ENCODE measurements at regions of chr2 and their contacts with region 1.

Region 1: GRCh38 chr2:85707304-85707703 is 13.1 kb downstream of the GNLY start:
- DNase-seq: peak; percentile 89
- H3K4me3 ChIP-seq: no peak overlapping the region
- H3K27ac ChIP-seq: no peak overlapping the region
- H3K4me1 ChIP-seq: peaks cover 22% of the 10 kb centered on the region
- H3K27me3 ChIP-seq: no peaks in the 10 kb centered on the region
- CTCF ChIP-seq: peak; percentile 94

Region 2: GRCh38 chr2:85589982-85590791 is 117.1 kb before region 1 on chr2:
- CTCF ChIA-PET with region 1: no interaction called
- POLR2A ChIA-PET with region 1: no interaction called
- intact Hi-C with region 1: no loop called
- DNase-seq: peak; percentile 58
- H3K4me3 ChIP-seq: no peak overlapping the region
- H3K27ac ChIP-seq: peak overlapping the region; percentile 56
- H3K4me1 ChIP-seq: peaks cover 17% of the 10 kb centered on the region
- H3K27me3 ChIP-seq: no peaks in the 10 kb centered on the region
- CTCF ChIP-seq: no peak

Region 3: DNA sequence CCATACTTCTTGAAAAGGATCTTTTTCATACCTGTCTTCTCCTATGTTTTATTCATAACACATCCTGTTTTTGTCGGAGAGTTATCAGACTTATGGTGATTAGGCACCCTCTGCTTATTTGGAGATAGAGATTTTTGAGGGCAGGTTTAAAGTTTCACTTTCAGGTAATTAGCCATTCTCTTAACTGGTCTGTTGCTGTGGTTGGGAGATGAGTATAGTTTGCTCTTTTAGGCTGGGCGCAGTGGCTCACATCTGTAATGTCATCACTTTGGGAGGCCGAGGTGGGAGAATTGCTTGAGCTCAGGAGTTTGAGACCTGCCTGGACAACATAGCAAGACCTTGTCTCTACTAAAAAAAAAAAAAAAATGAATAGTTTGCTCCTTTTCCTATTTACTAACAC is 64.6 kb before region 1 on chr2:
- CTCF ChIA-PET with region 1: interaction called, 7 read pairs
- POLR2A ChIA-PET with region 1: no interaction called
- intact Hi-C with region 1: loop called (anchors 1 kb)
- DNase-seq: no peak
- H3K4me3 ChIP-seq: no peak overlapping the region
- H3K27ac ChIP-seq: no peak overlapping the region
- H3K4me1 ChIP-seq: no peaks in the 10 kb centered on the region
- H3K27me3 ChIP-seq: no peaks in the 10 kb centered on the region
- CTCF ChIP-seq: no peak

Region 4: GRCh38 chr2:85678794-85679672 is 28.3 kb before region 1 on chr2:
- CTCF ChIA-PET with region 1: interaction called, 10 read pairs
- POLR2A ChIA-PET with region 1: no interaction called
- intact Hi-C with region 1: loop called (anchors 2 kb)
- DNase-seq: peak; percentile 87
- H3K4me3 ChIP-seq: no peak overlapping the region
- H3K27ac ChIP-seq: no peak overlapping the region
- H3K4me1 ChIP-seq: no peaks in the 10 kb centered on the region
- H3K27me3 ChIP-seq: no peaks in the 10 kb centered on the region
- CTCF ChIP-seq: peak; percentile 97

Region 5: DNA sequence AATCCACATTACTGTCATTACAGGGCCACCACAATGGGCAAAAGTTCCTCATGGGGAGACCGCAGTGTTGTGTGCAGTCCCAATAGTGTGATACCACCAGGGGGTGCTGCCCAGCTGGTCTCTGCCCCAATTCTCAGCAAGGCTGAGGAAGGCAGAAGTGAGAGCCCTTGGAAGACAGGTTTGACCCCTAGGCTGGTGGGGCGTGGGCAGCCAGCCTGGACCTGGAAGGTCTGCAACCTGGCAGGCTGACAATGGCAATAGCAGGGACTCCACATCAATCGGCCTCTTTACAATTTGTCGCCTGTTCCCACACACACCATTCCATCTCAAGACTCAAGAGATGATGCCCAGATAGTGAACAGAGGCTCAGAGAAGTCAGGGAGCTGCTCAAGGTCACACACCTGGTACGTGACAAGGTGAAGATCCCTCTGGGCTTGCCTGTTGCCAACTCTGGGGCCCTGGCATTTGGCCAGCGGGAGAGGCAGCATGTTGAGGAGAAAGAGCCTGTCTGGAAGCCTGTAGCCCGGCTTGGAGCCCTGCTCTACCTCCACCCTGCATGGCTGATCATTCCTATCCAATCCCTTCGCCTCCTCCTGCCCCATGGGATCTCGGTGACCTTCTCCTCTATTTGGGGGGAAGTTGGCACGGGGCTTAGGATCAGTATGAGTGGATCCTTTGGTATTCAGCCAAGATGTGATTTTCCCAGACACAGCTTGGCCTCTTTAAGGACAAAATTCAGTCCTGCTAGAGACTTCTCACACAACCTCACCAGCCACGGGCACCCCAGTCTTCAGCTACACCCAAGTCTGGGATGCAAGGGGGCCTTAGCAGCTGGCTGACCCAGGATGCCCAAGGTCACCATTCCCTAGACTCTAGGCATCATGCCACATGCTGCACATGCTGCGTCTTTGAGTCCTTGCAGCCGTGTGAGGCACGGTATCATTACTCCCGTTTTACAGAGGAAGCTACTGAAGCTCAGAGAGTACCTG is 43.6 kb after region 1 on chr2:
- CTCF ChIA-PET with region 1: no interaction called
- POLR2A ChIA-PET with region 1: no interaction called
- intact Hi-C with region 1: loop called (anchors 1 kb)
- DNase-seq: peak; percentile 68
- H3K4me3 ChIP-seq: no peak overlapping the region
- H3K27ac ChIP-seq: no peak overlapping the region
- H3K4me1 ChIP-seq: peaks cover 29% of the 10 kb centered on the region
- H3K27me3 ChIP-seq: no peaks in the 10 kb centered on the region
- CTCF ChIP-seq: peak; percentile 93